Activated CD8-positive, alpha-beta memory T cell treated with anti-CD3 and anti-CD28 coated beads, Interleukin-2, amount 10 ng/mL, durations not matched to agents 7 days and 5 days (primary cell): ENCODE measurements at regions of chr7 and their contacts with region 1.

Region 1: GRCh38 chr7:92833024-92833765 is 3.2 kb downstream of the CDK6 start:
- DNase-seq: peak; percentile 94
- ATAC-seq: peak; percentile 68
- H3K4me3 Mint-ChIP-seq: peak overlapping the region; percentile 97
- H3K27ac Mint-ChIP-seq: peak overlapping the region; percentile 90
- H3K4me1 Mint-ChIP-seq: peaks cover 41% of the 10 kb centered on the region
- H3K27me3 Mint-ChIP-seq: no peaks in the 10 kb centered on the region

Region 2: DNA sequence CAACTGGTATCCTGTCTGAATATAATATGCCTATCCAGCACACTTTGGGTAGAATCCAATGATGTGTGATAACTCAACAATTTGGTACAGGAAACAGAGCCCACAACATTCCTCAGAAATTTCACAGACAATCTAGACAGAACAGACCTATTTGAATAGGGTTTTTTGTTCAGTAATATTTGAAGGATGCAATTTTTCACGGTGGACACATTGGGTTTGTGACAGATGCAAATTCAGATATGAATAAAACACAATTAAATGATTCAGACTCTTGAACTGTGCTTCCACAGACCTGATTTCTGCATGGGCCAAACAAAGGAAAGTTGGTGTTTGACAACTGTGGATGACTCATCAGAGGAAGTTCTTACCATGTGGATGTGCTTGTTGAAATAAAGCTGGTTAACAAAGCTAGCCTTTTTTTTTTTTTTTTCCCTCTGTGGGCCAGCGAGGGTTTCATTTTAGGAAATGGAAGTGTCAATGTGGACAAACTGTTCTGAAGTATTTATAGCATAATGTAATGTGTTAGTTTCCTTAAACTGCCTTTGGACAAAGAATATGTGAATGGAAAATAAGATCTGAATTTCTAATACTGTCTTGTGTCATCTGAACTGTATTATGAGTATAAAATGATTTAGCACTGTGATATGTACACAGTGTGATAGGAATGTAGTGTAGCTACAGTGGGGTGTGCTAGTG is 199.8 kb before region 1 on chr7:
- CTCF ChIA-PET with region 1: interaction called, 10 read pairs
- DNase-seq: no peak
- ATAC-seq: peak; percentile 68
- H3K4me3 Mint-ChIP-seq: peak overlapping the region; percentile 50
- H3K27ac Mint-ChIP-seq: peak overlapping the region; percentile 87
- H3K4me1 Mint-ChIP-seq: peaks cover 69% of the 10 kb centered on the region
- H3K27me3 Mint-ChIP-seq: no peaks in the 10 kb centered on the region

Region 3: DNA sequence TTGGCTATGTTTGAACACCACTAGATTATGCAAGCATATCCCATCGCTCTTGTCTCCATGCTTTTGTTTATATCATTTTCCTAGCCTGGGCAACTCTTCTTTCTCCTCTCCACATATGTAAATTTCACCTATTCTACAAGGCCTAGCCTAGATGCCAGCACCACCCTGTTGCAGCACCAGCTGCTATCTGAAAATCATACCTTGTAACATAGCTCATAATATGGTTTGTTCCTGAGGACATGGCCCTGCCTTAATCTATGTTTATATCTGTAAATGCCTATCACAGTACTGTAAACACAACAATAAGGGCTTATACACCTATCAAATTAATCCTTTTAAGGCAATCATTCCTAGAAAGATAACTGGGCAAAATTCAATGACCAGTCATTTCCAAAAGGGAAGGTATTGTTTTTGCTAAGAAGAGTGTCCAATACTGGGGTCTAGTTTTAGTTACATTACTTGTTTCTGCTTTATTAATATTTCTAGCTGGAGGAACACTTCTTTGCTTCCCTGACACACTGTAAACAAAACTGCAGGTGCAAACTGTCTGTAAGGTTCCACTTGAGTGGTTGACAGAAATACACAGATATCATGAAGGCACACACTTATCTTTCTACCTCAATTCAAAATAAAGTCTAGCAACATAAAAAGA is 158.9 kb before region 1 on chr7:
- CTCF ChIA-PET with region 1: no interaction called
- DNase-seq: no peak
- ATAC-seq: no peak
- H3K4me3 Mint-ChIP-seq: no peak overlapping the region
- H3K27ac Mint-ChIP-seq: peak overlapping the region; percentile 28
- H3K4me1 Mint-ChIP-seq: peaks cover 59% of the 10 kb centered on the region
- H3K27me3 Mint-ChIP-seq: no peaks in the 10 kb centered on the region

Region 4: DNA sequence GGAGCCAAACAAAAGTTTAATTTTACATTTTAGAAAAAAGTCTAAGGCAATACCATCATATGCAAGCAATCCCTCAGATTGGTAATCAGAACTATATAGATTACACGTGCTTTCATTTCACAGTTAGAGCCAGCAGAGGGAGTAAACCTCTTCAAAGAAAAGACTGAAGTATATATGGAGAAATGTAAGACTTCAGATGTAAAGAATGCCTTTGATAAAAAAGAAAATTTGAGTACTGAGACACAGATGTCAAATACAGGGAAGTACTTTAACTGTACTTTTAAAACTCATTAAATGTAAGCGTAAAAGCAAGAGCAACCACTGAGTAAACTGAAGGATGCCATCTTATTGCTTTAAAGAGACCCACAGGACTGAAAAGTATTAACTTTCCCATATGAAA is 141.6 kb before region 1 on chr7:
- CTCF ChIA-PET with region 1: interaction called, 16 read pairs
- DNase-seq: no peak
- ATAC-seq: peak; percentile 93
- H3K4me3 Mint-ChIP-seq: no peak overlapping the region
- H3K27ac Mint-ChIP-seq: peak overlapping the region; percentile 56
- H3K4me1 Mint-ChIP-seq: peaks cover 58% of the 10 kb centered on the region
- H3K27me3 Mint-ChIP-seq: no peaks in the 10 kb centered on the region

Region 5: GRCh38 chr7:92809397-92810241 is 23.6 kb before region 1 on chr7:
- CTCF ChIA-PET with region 1: interaction called, 57 read pairs
- DNase-seq: peak; percentile 90
- ATAC-seq: peak; percentile 85
- H3K4me3 Mint-ChIP-seq: peak overlapping the region; percentile 70
- H3K27ac Mint-ChIP-seq: peak overlapping the region; percentile 99
- H3K4me1 Mint-ChIP-seq: peaks cover 79% of the 10 kb centered on the region
- H3K27me3 Mint-ChIP-seq: no peaks in the 10 kb centered on the region